ENCODE measurements at regions of chr10 and their contacts with region 1.

Region 1: GRCh38 chr10:97914837-97915211 is 65.2 kb downstream of the GOLGA7B start:
- DNase-seq: peak; percentile 64
- ATAC-seq: peak; percentile 39
- H3K4me3 ChIP-seq: no peak overlapping the region
- H3K4me3 Mint-ChIP-seq: no peak overlapping the region
- H3K27ac ChIP-seq: no peak overlapping the region
- H3K27ac Mint-ChIP-seq: no peak overlapping the region
- H3K4me1 ChIP-seq: peaks cover 0 to 5% of the 10 kb centered on the region in 2 donors
- H3K4me1 Mint-ChIP-seq: no peaks in the 10 kb centered on the region
- H3K27me3 ChIP-seq: peaks cover 0 to 4% (median 2%) of the 10 kb centered on the region in 4 experiments
- H3K27me3 Mint-ChIP-seq: peaks cover 45% of the 10 kb centered on the region
- CTCF ChIP-seq: peak; percentile 79

Region 2: GRCh38 chr10:97534746-97535367 is 380.0 kb before region 1 on chr10:
- CTCF ChIA-PET with region 1: no interaction called
- POLR2A ChIA-PET with region 1: no interaction called
- intact Hi-C with region 1: no loop called
- DNase-seq: no peak
- ATAC-seq: no peak
- H3K4me3 ChIP-seq: no peak overlapping the region
- H3K4me3 Mint-ChIP-seq: no peak overlapping the region
- H3K27ac ChIP-seq: no peak overlapping the region
- H3K27ac Mint-ChIP-seq: no peak overlapping the region
- H3K4me1 ChIP-seq: no peaks in the 10 kb centered on the region
- H3K4me1 Mint-ChIP-seq: no peaks in the 10 kb centered on the region
- H3K27me3 ChIP-seq: no peaks in the 10 kb centered on the region
- H3K27me3 Mint-ChIP-seq: no peaks in the 10 kb centered on the region
- CTCF ChIP-seq: no peak

Region 3: GRCh38 chr10:97792141-97792721 is 122.6 kb before region 1 on chr10:
- CTCF ChIA-PET with region 1: no interaction called
- POLR2A ChIA-PET with region 1: no interaction called
- intact Hi-C with region 1: no loop called
- DNase-seq: peak; percentile 63
- ATAC-seq: peak; percentile 47
- H3K4me3 ChIP-seq: no peak overlapping the region
- H3K4me3 Mint-ChIP-seq: no peak overlapping the region
- H3K27ac ChIP-seq: no peak overlapping the region
- H3K27ac Mint-ChIP-seq: no peak overlapping the region
- H3K4me1 ChIP-seq: peaks cover 0 to 6% of the 10 kb centered on the region in 2 donors
- H3K4me1 Mint-ChIP-seq: no peaks in the 10 kb centered on the region
- H3K27me3 ChIP-seq: peaks cover 0 to 36% (median 3%) of the 10 kb centered on the region in 4 experiments
- H3K27me3 Mint-ChIP-seq: peaks cover 41% of the 10 kb centered on the region
- CTCF ChIP-seq: peak; percentile 84

Region 4: GRCh38 chr10:97822261-97822687 is 92.5 kb before region 1 on chr10:
- CTCF ChIA-PET with region 1: no interaction called
- POLR2A ChIA-PET with region 1: no interaction called
- intact Hi-C with region 1: no loop called
- DNase-seq: no peak
- ATAC-seq: no peak
- H3K4me3 ChIP-seq: no peak overlapping the region
- H3K4me3 Mint-ChIP-seq: no peak overlapping the region
- H3K27ac ChIP-seq: no peak overlapping the region
- H3K27ac Mint-ChIP-seq: no peak overlapping the region
- H3K4me1 ChIP-seq: no peaks in the 10 kb centered on the region
- H3K4me1 Mint-ChIP-seq: no peaks in the 10 kb centered on the region
- H3K27me3 ChIP-seq: no peaks in the 10 kb centered on the region
- H3K27me3 Mint-ChIP-seq: peaks cover 9% of the 10 kb centered on the region
- CTCF ChIP-seq: no peak

Region 5: DNA sequence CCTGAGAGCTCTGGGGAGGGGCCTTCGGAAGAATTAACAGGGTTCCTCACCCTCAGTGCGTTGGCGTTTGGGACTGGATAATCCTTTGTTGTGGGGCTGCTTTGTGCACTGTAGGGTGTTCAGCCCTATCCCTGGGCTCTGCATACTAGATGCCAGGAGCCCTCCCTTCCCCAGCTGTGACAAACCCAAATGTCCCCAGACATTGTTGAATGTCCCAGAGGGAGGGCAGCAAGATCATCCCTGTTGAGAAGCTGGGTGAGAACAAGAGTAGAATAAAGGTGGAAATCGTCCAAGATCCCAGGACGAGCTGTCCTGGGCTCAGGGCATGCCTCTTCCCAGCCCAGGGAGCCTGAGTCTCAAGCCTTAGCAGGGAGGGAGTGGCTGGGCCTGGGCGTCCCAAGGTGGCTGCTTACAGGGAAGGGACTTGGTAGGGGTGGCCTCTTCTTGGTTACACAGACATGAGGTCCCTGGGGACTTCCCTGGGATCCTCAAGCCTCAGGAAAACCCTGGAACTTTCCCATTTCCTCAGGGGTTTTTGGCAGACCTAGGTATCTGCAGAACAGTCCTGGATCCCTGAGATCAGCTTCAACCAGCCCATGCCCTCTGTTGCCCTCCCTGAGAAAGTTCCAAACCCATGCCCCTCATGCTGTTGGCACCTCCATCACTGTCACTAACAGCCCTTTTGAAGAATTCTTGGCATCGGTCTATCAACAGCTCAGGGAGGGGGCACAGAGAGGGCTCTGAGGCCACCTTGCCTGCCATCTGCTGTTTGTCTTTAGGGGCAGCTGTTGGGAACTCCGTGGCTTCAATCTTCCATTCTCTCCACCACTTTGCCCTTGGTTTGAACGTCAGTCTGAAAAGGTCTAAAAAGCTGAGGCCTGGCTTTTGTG is 11.5 kb before region 1 on chr10:
- CTCF ChIA-PET with region 1: interaction called, 12 read pairs
- POLR2A ChIA-PET with region 1: no interaction called
- intact Hi-C with region 1: no loop called
- DNase-seq: no peak
- ATAC-seq: no peak
- H3K4me3 ChIP-seq: no peak overlapping the region
- H3K4me3 Mint-ChIP-seq: no peak overlapping the region
- H3K27ac ChIP-seq: no peak overlapping the region
- H3K27ac Mint-ChIP-seq: no peak overlapping the region
- H3K4me1 ChIP-seq: no peaks in the 10 kb centered on the region
- H3K4me1 Mint-ChIP-seq: no peaks in the 10 kb centered on the region
- H3K27me3 ChIP-seq: peaks cover 0 to 7% (median 2%) of the 10 kb centered on the region in 4 experiments
- H3K27me3 Mint-ChIP-seq: peaks cover 27% of the 10 kb centered on the region
- CTCF ChIP-seq: no peak

Region 6: DNA sequence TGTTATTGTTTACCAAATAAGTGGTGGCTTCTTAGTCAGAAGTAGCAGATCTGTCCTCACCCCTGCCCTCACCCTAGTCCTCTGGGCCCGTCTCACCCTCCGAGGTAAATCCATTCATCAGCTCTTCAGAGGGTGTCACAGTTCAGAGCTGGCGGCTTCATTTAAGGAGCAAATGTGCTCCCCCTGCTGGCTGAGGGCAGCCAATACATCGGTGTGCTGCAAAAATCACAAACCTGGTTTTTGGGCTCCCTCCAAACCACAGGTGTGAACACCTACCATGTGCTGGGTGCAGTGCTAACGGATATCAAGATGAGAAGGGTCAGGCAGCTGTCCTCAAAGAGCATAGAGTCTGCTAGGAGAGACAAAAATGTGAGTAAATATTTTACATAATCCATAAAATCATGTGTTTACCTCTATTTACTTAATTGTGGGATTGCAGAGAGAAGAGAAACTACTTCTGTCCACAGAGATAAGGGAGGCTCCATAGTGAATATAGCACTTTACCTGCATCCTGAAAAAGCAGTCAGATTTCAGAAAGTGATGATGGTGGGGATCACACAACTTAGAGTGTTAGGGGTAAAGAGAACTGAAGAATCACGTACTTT is 131.1 kb after region 1 on chr10:
- CTCF ChIA-PET with region 1: interaction called, 33 read pairs
- POLR2A ChIA-PET with region 1: no interaction called
- intact Hi-C with region 1: no loop called
- DNase-seq: peak; percentile 70
- ATAC-seq: peak; percentile 56
- H3K4me3 ChIP-seq: no peak overlapping the region
- H3K4me3 Mint-ChIP-seq: no peak overlapping the region
- H3K27ac ChIP-seq: no peak overlapping the region
- H3K27ac Mint-ChIP-seq: no peak overlapping the region
- H3K4me1 ChIP-seq: no peaks in the 10 kb centered on the region
- H3K4me1 Mint-ChIP-seq: no peaks in the 10 kb centered on the region
- H3K27me3 ChIP-seq: peaks cover 0 to 29% (median 15%) of the 10 kb centered on the region in 4 experiments
- H3K27me3 Mint-ChIP-seq: peaks cover 48% of the 10 kb centered on the region
- CTCF ChIP-seq: peak; percentile 96